ENCODE measurements at regions of chr9 and their contacts with region 1.

Region 1: DNA sequence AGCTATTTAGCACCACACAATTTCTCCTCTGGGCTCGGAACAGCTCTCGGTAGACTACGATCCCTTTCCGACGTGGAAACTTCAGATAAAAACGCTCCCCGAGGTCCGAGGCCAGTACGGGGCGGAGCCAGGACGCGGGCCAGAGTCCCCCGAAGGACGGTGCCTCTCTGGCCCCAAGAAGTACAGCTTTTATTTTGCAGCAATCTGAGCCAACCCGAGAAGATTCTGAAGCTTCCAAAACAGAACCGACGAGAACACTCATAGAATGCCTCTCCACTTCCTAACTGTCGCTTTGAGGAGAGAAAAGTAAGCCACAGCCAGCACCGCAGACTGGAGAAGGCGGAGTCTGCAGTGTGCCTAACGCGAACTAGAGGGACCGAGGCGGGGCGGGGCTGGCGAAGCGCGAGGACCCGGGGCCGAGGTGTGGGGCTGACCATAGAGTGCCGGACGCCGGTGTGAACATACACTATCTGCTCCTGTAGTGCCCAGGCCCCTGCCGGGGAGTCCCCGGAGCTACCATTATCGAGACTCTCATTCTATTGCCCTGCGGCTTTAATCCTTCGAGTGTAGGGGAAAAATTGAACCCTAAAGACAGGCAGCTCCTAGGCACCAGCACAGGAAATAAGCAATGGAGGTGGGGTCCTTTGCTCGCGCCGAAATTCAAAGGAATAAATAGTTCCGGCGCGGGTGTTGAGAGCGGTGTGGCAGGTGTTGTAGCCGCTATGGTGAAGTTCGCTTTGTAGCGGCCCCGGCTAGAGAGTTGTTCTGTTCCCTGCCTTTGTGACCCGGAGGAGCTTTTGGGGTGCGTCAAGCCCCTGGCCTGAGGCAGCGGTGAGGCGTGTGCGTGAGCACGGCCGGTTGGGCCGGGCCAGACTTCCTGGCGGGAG is at the start of gene SMC2:
- DNase-seq: peak; percentile 75 to 95
- H3K4me3 ChIP-seq: peak within 1 kb of the TSS; percentile 71
- H3K27ac ChIP-seq: peak within 1 kb of the TSS; percentile 85
- H3K4me1 ChIP-seq: peaks cover 22% of the 10 kb centered on the region
- H3K27me3 ChIP-seq: no peaks in the 10 kb centered on the region
- CTCF ChIP-seq: no peak
- total RNA-seq, gene SMC2: 29.2 and 40.5 TPM in 2 replicates

Region 2: GRCh38 chr9:104075801-104076753 is 17.8 kb before region 1 on chr9:
- CTCF ChIA-PET with region 1: no interaction called
- POLR2A ChIA-PET with region 1: interaction called, 6 read pairs
- intact Hi-C with region 1: loop called (anchors 2 kb)
- DNase-seq: peak in 1 of 2 experiments; percentile 0
- H3K4me3 ChIP-seq: no peak overlapping the region
- H3K27ac ChIP-seq: no peak overlapping the region
- H3K4me1 ChIP-seq: no peaks in the 10 kb centered on the region
- H3K27me3 ChIP-seq: no peaks in the 10 kb centered on the region
- CTCF ChIP-seq: no peak

Region 3: DNA sequence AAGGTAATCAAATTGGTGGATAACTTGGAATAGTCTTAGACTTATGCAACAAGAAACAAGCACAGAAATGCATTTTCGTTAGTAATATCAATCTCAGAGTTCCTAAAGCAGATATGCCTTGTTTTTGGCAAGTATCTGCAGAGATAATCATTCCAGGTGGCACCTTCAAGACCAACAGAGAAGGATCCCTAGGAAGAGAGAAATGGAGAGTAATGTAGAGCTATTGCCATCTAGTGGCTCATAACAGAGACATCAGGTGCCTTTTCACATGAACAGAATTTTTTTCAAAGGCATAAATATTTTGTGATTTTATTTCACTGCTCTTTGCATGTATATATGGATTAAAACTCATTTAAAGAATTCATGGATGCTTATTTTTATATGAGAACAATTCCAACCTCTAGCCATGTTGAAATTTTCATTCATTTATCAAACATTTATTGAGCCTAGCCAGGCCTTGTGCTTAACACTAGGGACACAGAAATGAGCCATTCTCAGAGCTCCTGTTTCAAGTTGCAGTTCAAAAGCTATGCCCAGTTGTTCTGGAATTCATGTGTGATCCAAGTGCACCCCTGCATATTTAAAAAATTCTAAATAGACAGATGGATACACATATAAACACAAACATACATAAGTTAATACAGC is 292.7 kb after region 1 on chr9:
- CTCF ChIA-PET with region 1: no interaction called
- POLR2A ChIA-PET with region 1: no interaction called
- intact Hi-C with region 1: no loop called
- DNase-seq: no peak
- H3K4me3 ChIP-seq: no peak overlapping the region
- H3K27ac ChIP-seq: no peak overlapping the region
- H3K4me1 ChIP-seq: no peaks in the 10 kb centered on the region
- H3K27me3 ChIP-seq: no peaks in the 10 kb centered on the region
- CTCF ChIP-seq: peak; percentile 74

Region 4: GRCh38 chr9:104675611-104676010 is 581.7 kb after region 1 on chr9:
- CTCF ChIA-PET with region 1: no interaction called
- POLR2A ChIA-PET with region 1: interaction called, 11 read pairs
- intact Hi-C with region 1: no loop called
- DNase-seq: no peak
- H3K4me3 ChIP-seq: no peak overlapping the region
- H3K27ac ChIP-seq: no peak overlapping the region
- H3K4me1 ChIP-seq: no peaks in the 10 kb centered on the region
- H3K27me3 ChIP-seq: no peaks in the 10 kb centered on the region
- CTCF ChIP-seq: no peak